Activated naive CD4-positive, alpha-beta T cell treated with anti-CD3 and anti-CD28 coated beads for 36 hours (primary cell): ENCODE measurements at regions of chr9 and their contacts with region 1.

Region 1: DNA sequence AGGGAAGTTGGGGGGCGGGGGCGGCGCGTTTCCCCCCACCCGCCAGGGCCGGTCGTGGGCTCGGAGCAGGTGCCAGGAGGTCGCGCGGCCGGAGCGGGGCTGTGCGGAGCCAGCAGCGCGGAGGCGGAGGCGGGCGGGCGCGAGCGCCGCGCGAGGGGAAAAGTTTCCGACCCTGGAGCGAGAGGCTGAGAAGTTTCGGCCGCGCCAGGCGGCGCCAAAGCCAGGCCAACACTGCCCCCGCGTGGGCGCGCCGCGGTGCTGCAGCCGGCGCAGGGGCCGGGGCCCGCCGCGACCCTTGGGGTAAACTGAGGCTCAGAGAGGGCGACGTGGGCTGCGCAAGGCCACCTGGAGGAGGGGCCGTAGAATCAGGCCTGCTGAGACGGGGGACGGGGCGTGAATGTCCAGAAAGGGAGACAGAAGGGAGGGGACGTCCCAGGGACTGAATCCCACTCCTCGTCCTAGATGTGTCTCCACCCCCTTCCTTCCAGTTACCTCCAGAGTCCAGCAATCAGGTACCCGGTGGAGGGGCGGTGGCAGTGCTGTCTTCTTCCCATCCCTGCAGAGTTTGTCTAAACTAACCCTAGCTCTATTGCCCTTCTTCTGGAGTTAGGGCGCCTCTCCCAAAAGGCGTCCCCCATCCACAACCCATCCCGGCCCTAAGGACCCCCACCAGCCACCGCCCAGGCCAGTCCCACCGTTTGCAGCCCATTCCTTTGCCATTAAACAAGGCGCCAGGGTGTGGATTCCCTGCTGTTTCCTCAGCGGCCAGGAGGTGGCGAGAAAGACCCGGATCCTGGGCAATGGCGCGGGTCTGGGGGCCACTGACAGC is 10.2 kb downstream of the C9orf50 start:
- DNase-seq: peak; percentile 83
- H3K4me3 Mint-ChIP-seq: peak overlapping the region; percentile 71
- H3K27ac Mint-ChIP-seq: no peak overlapping the region
- H3K4me1 Mint-ChIP-seq: peaks cover 25% of the 10 kb centered on the region
- H3K27me3 Mint-ChIP-seq: no peaks in the 10 kb centered on the region

Region 2: GRCh38 chr9:129131300-129132145 is 479.2 kb before region 1 on chr9:
- CTCF ChIA-PET with region 1: interaction called, 8 read pairs
- intact Hi-C with region 1: loop called (anchors 1 kb)
- DNase-seq: peak; percentile 90
- H3K4me3 Mint-ChIP-seq: no peak overlapping the region
- H3K27ac Mint-ChIP-seq: peak overlapping the region; percentile 27
- H3K4me1 Mint-ChIP-seq: peaks cover 6% of the 10 kb centered on the region
- H3K27me3 Mint-ChIP-seq: no peaks in the 10 kb centered on the region

Region 3: DNA sequence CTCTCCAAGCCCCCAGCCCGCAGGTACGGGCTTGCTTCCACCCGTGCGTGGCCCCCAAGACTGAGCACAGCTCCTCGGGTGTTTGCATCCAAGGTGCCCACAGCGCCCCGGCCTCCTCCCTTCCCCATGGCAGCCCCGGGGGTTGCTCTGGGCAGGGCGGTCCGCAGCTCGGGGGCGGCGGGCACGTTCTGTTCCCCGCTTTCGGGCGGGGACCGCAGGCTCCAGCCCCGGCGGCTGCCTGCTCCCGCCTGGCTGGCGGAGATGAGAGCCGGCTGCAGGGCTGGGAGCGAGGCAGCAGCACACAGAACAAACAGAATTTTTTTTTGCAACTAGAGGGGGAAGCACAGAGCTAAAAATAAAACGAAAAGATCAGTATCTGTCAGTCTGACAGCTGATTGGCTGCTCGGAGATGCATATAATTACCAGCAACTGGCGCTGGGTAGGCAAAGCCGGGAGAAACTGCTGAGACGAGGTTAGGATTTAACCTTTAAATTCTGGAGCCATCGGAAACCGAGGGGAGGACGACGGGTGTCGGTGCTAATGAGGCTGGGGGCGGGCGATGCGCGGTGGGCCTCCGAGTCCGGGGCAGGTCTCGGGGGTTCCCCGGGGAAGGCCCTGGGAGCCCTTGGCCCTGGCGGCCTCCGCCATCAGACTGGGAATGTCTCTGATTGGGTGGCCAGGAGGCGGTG is 290.0 kb before region 1 on chr9:
- CTCF ChIA-PET with region 1: interaction called, 5 read pairs
- intact Hi-C with region 1: loop called (anchors 2 kb)
- DNase-seq: peak; percentile 77
- H3K4me3 Mint-ChIP-seq: peak overlapping the region; percentile 68
- H3K27ac Mint-ChIP-seq: peak overlapping the region; percentile 67
- H3K4me1 Mint-ChIP-seq: peaks cover 18% of the 10 kb centered on the region
- H3K27me3 Mint-ChIP-seq: no peaks in the 10 kb centered on the region

Region 4: DNA sequence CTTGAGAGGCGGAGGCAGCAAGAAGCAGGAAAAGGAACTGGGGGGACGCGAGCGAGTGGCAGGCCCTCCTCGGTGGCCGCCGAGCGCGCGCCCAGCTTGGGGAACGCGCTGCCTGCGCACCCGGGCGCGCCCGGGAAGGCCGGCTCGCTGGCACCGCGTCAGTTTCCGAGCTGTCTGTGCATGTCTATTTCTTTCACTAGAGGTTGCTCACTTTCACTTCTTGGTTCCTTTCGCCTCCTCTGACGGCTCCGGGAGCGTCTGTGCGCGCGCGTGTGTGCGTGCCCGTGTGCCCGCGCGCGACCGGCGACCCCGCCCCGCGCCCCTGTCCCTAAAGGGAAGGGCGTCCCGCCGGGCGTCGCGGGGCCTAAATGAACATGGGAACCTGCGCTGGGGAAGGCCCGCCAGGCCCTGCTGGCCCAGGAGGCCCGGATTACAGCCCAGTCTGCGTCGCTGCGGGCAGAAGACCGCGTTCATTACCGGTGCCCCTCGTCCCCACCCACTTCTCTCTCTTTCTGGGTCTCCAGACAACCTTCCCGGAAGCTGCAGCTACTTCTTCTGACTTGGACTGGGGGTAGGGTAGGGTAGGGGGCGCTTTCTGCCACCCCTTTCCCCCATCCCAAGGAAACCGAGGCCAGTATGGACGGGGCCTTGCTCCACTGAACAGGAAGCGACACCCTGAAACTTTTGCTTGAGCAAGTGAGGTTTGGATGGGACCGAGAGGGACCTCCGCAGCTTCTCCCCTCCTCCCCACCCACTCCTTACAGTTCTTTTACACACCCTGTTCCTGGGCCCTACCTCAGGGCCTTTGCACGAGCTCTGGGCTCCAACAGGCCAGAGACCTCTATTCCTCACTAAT is 226.9 kb before region 1 on chr9:
- CTCF ChIA-PET with region 1: interaction called, 3 read pairs
- intact Hi-C with region 1: loop called (anchors 2 kb)
- DNase-seq: peak; percentile 80
- H3K4me3 Mint-ChIP-seq: peak overlapping the region; percentile 69
- H3K27ac Mint-ChIP-seq: peak overlapping the region; percentile 66
- H3K4me1 Mint-ChIP-seq: peaks cover 10% of the 10 kb centered on the region
- H3K27me3 Mint-ChIP-seq: no peaks in the 10 kb centered on the region

Region 5: DNA sequence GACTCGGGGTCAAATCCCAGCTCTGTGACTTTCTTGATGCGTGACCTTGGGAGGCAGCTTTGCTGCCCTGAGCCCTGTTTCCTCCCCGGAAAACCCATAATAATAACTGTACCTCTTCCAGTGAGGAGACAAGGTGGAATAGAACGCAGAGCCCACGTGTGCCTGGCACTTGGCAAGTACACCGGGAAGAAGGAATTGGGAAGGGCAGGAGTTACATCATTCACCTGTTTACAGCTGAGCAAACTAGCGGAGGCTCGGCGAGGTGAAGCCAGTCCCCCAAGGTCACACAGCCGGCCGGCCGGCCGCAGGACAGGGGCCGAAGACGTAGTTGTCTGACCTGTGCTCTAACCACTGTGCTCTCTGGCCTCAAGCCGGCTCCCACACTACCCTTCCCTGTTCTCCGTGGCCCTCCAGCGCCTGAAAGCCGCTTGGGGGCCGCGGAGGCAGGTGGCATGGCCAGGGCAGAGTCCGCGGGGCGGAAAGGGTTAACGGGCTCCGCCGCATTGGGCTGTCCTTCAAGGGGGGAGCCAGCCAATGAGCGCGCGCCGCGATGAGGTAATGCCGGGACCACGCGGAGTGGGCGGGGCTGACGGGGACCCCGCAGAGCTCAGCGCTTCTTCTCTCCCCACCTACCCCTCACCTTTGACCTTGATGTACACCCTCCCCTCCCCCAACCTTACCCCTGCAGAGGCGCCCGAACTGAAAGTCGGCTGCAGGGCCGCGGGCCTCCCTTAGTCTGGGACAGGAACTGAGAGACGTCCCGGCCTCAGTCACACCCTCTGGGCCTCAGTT is 115.0 kb before region 1 on chr9:
- CTCF ChIA-PET with region 1: no interaction called
- intact Hi-C with region 1: loop called (anchors 5 kb)
- DNase-seq: peak; percentile 84
- H3K4me3 Mint-ChIP-seq: peak overlapping the region; percentile 76
- H3K27ac Mint-ChIP-seq: peak overlapping the region; percentile 64
- H3K4me1 Mint-ChIP-seq: peaks cover 33% of the 10 kb centered on the region
- H3K27me3 Mint-ChIP-seq: no peaks in the 10 kb centered on the region

Region 6: GRCh38 chr9:129626079-129626624 is 15.5 kb after region 1 on chr9 and contains the start of gene NTMT1:
- CTCF ChIA-PET with region 1: interaction called, 42 read pairs
- intact Hi-C with region 1: loop called (anchors 1 kb)
- DNase-seq: peak; percentile 92
- H3K4me3 Mint-ChIP-seq: peak within 1 kb of the TSS; percentile 77
- H3K27ac Mint-ChIP-seq: peak within 1 kb of the TSS; percentile 93
- H3K4me1 Mint-ChIP-seq: peaks cover 59% of the 10 kb centered on the region
- H3K27me3 Mint-ChIP-seq: peaks cover 14% of the 10 kb centered on the region
- total RNA-seq, gene NTMT1: 58.6 to 59.3 TPM